ENCODE measurements at regions of chr16 and their contacts with region 1.

Region 1: DNA sequence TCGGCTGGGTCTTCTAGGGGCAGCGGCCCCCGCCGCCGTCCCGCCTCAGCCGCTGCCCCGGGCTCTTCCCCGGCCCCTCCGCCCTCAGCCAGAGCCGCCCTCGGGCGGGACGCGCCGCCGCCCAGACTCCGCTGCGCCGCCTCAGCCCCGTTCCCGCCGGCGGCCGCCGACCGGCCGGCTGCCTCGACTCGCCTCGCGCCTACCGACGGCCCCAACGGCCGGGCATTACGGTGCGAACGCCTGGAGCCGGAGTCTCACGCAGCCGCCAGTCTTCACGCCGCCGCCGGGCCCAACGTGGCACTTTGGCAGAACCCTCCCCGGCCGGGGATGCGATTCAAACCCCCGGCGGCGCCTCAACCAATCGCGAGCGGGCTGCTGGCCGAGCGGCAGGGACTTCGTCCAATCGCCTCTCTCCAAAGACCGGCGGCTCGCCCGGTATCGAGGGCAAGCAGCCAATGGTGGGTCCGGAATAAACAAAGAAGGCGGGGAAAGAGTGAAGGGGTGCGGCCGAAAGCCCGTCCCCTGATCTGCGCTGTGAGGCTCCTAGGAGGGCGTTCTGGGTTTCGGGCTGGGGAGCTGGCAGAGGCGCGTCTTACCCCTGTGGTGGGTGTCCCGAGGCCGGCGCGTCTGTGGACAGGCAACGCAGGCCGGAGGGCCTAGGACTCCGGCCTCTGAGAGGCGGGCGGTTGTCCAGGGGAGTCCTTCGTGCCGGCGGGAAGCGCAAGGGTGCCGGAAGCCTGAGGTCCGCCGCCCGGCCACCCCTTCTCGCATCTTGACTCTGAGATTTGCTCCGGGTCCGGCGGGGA is at the start of gene CDR2:
- H3K4me3 Mint-ChIP-seq: peak within 1 kb of the TSS; percentile 83
- H3K27ac Mint-ChIP-seq: peak within 1 kb of the TSS; percentile 79
- H3K4me1 Mint-ChIP-seq: peaks cover 47% of the 10 kb centered on the region
- H3K27me3 Mint-ChIP-seq: peaks cover 6% of the 10 kb centered on the region

Region 2: DNA sequence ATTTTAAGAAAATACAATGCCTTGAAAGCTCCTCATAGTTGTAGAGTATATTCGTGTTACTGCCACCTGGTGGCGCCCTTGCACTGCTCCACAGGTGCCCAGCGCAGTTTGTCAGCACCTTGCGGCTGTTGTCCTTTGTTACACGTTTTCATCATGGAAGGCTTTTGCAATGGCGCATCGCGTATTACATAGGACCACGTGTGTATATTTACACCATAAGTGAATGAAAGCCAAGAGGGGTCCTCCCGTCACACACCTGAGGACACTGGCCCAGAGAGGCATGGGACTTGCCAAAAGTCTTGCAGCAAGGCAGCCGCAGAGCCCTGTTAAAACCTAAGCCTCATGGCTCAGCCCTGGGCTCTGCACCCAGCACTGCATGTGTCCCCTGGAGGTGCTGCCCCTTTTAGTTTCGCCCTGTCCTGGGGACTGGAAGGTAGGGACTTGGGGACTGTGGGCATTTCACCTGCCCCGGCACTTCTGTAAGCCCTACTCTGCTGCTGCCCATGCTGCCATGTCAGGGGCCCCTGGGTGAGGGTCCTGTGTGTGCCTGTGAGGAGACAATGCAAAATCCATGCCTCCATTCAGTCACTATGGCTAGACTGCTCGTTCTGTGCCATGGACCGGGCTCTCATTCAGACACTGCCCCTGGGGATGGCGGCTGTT is 53.0 kb before region 1 on chr16:
- intact Hi-C with region 1: loop called (anchors 2 kb)
- H3K4me3 Mint-ChIP-seq: no peak overlapping the region
- H3K27ac Mint-ChIP-seq: no peak overlapping the region
- H3K4me1 Mint-ChIP-seq: peaks cover 9% of the 10 kb centered on the region
- H3K27me3 Mint-ChIP-seq: no peaks in the 10 kb centered on the region

Region 3: DNA sequence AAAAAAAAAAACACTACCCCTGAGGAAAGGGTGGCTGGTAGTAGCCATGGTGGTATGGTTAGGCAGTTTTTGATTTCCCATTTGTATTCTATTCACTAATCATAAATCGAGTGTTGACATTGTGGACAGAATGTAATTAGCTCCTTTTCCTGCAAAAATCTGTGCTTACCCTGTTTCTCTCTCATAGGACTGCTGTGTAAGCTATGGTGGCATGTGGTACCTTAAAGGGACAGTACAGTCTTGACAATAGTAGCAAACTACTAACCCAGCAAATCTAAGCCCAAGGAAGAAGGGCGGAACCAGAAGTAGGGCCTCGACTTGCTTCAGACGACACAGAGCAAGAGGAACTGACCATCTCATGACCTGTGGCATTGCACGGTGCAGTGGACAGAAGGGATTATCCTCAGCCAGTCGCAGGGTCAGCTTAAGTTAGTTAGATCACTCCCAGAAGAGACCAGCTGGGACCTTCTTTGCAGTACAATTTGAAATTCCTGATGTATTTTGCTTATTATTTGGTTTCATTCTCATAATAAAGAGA is 41.0 kb before region 1 on chr16:
- intact Hi-C with region 1: loop called (anchors 5 kb)
- H3K4me3 Mint-ChIP-seq: no peak overlapping the region
- H3K27ac Mint-ChIP-seq: peak overlapping the region; percentile 43
- H3K4me1 Mint-ChIP-seq: peaks cover 56% of the 10 kb centered on the region
- H3K27me3 Mint-ChIP-seq: no peaks in the 10 kb centered on the region

Region 4: GRCh38 chr16:22417019-22417418 is 42.5 kb after region 1 on chr16:
- intact Hi-C with region 1: no loop called
- H3K4me3 Mint-ChIP-seq: no peak overlapping the region
- H3K27ac Mint-ChIP-seq: no peak overlapping the region
- H3K4me1 Mint-ChIP-seq: peaks cover 11% of the 10 kb centered on the region
- H3K27me3 Mint-ChIP-seq: no peaks in the 10 kb centered on the region